ENCODE measurements at regions of chr6 and their contacts with region 1.

Region 1: DNA sequence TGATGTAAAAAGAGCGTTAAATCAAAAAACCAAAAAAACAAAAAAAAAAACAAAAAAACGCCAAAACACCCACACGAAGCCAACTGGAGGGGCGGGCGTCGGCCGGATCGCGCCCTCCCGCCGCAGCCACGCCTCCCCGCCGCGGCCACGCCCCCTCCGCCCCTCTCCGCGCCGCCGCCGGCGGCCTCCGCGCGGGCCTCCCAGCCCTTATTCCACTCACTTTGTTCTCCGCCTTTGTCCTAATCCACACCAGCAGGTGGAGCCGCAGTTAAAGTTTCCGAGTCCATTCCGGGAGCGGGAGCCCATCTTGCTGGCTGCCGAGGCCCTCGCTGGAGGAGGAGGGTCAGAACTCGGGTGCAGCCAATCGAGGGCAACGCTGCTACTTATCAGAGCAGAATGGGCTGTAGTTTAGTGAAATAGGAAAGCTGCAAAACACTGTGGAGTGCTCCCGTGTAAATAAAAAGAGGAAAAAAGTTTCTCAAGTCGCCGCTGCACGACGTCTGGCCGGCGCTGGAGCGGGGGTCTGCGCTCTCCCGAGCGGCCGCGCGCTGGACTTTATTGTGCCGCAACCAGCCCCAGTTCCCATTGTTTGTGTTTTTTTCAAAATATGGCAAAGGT is at the start of gene ASF1A:
- DNase-seq: peak; percentile 92
- CTCF ChIP-seq: peak; percentile 74

Region 2: DNA sequence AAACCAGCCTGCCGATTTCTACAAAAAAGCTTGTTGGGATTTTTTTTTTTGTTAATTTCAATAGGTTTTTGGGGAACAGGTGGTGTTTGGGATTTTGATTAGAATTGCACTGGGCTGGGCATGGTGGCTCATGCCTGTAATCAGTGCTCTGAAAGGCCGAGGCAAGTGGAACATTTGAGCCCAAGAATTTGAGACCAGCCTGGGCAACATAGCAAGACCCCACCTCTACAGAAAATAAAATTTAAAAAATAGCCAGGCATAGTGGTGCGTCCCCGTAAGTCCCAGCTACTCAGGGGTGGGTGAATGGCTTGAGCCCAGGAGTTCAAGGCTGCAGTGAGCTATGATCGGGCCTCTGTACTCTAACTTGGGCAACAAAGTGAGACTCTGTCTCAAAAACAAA is 40.5 kb before region 1 on chr6:
- CTCF ChIA-PET with region 1: no interaction called
- POLR2A ChIA-PET with region 1: no interaction called
- DNase-seq: no peak
- CTCF ChIP-seq: no peak

Region 3: DNA sequence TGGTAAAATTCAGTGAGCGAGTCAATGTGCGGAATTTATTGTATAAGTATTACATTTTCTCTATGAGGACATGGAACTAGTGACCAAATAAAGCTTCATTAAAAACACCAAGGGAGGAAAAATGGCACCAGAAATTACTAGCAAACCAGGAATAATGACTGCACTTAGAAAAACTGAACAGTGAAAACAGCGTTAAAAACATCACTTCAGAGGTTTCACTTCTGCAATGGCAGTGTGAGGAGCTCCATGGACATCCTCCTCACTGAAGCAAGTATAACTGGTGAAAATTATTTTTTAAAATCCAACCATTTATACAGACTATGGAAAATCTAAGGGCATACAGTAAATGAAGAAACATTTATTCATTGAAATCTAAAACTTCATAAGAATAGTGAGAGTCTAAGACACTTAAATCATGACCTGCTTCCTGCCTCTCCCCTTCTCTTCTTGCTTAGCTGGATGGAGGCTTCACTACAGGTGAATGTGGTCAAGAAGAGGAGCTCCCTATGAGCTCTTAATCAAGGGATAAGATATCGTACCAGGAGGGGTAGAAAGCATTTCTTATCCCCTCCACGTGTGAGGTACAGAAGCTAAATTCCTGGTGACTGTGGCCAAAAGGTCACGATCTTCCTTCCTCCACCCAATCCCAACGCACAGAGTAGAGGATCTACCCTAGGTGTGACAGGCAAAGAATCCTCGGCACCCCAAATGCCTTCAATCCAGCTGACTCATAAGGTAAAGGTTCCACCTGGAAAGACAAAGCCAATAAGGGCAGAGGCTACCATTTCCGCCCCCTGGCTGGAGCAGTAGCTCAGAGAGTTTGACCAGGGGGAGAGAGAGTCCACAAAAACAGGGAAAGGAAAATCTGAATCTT is 12.2 kb before region 1 on chr6:
- CTCF ChIA-PET with region 1: interaction called, 17 read pairs
- POLR2A ChIA-PET with region 1: no interaction called
- DNase-seq: peak; percentile 30
- CTCF ChIP-seq: no peak

Region 4: GRCh38 chr6:118905851-118906250 is 11.9 kb after region 1 on chr6:
- CTCF ChIA-PET with region 1: interaction called, 28 read pairs
- POLR2A ChIA-PET with region 1: no interaction called
- DNase-seq: no peak
- CTCF ChIP-seq: no peak

Measured in GM10248 (cell line).